ENCODE measurements at regions of chr21 and their contacts with region 1.

Region 1: GRCh38 chr21:33199516-33200217 is 30.1 kb upstream of the IFNAR2 start:
- DNase-seq: peak; percentile 31
- H3K4me3 ChIP-seq: no peak overlapping the region
- H3K27ac ChIP-seq: peak overlapping the region in 3 of 4 donors; percentile 40 to 64 (median 42)
- H3K4me1 ChIP-seq: peaks cover 0 to 33% (median 19%) of the 10 kb centered on the region in 3 donors
- H3K27me3 ChIP-seq: no peaks in the 10 kb centered on the region
- CTCF ChIP-seq: peak; percentile 73 to 89 (median 82)
- POLR2A ChIP-seq: no peak

Region 2: DNA sequence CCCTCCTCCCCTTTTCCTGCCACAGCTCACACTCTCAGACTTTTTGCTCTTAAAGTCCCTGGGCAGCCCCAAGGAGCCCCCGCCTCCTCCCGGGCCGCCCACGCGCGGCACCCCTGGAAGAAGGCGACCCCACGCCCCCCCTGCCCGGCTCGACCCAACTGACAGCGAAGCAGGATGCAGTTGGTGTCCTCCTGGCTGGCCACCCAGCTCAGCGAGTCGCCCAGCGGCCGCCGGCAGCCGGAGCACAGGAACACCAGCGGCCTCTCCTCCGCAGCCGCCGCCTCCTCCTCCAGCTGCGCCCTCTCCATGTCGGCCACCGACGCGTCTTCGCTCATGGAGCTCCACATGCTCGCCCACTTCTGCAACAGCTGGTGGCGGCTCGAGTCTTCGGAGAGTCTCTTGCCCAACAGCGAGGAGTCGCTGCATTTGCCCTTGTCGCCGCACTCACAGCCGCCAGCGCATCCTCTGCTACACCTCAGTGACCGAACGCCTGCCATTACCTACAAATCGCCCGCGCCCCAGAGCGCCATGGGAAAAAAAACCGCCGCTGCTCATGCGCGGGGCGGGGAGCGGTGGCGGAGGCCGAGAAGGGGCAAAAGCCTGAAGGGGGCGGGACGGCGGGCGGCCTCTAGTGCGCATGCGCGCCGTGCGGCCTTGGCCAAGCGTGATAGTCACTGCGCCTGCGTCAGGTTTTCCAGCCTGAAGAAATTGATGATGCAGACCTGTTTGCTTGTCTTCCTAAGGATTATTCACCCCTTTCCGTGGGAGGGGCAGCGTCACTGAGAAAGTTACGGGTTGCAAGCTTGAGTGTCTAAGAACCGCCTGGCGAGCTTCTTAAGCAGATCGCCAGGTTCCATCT is 920.9 kb before region 1 on chr21 and contains the start of gene MIS18A:
- intact Hi-C with region 1: no loop called
- DNase-seq: peak; percentile 60
- H3K4me3 ChIP-seq: peak within 1 kb of the TSS; percentile 75 to 91 (median 82)
- H3K27ac ChIP-seq: peak within 1 kb of the TSS; percentile 75 to 84 (median 76)
- H3K4me1 ChIP-seq: peaks cover 15 to 29% (median 18%) of the 10 kb centered on the region in 3 donors
- H3K27me3 ChIP-seq: no peaks in the 10 kb centered on the region
- CTCF ChIP-seq: peak in 2 of 6 experiments; percentile 10 to 58
- POLR2A ChIP-seq: peak in 3 of 4 donors; percentile 30 to 53 (median 37)
- total RNA-seq, gene MIS18A: 4.3 to 13.7 (median 8.9) TPM

Region 3: DNA sequence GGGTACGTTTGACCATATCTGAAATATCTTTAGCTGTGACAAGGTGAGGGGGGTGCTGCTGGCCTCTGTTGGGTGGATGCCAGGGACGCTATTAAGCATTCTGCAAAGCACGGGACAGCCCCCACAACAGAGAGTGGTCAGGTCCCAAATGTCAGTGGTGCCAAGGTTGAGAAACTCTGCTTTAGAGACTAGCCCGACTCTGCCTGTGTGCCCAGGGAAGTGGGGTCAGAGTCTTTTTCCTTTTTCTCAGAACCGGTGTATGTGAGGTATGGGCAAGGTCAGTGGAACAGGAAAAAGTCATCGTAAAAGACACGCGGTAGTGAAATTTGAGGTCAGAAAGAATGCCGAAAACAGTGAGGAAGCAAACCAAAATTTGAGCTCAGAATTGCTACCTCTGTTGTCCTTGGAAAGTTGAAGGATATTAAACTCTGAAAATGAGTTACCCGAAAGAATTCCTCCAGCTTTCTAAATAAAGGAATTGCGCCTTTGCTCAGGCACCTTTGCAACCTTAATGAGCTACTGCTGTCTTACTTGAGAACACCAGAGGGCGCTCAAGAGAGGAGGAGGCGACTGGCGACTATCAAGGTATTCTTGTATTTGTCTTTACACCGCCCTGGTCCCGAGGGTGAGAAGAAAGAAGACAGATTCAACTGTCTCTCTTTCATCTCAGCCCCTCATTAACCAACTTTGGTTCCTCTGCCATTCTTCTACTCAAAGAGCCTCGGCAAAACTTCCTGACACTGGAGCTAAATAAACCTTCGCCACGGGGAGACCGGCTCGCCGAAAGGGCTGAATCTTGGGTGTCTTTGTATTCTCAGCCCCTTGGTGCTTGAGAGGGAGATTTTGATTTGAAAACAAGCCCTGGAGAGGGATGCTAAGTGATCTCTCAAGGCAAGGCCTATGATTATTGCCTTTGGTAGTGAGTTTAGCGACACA is 259.3 kb before region 1 on chr21:
- intact Hi-C with region 1: loop called (anchors 10 kb)
- DNase-seq: no peak
- H3K4me3 ChIP-seq: no peak overlapping the region
- H3K27ac ChIP-seq: no peak overlapping the region
- H3K4me1 ChIP-seq: no peaks in the 10 kb centered on the region
- H3K27me3 ChIP-seq: peaks cover 0 to 25% (median 0%) of the 10 kb centered on the region in 4 donors
- CTCF ChIP-seq: peak; percentile 46 to 79 (median 60)
- POLR2A ChIP-seq: no peak

Region 4: GRCh38 chr21:33051925-33052324 is 147.7 kb before region 1 on chr21:
- intact Hi-C with region 1: no loop called
- DNase-seq: no peak
- H3K4me3 ChIP-seq: no peak overlapping the region
- H3K27ac ChIP-seq: no peak overlapping the region
- H3K4me1 ChIP-seq: no peaks in the 10 kb centered on the region
- H3K27me3 ChIP-seq: peaks cover 0 to 74% (median 0%) of the 10 kb centered on the region in 4 donors
- CTCF ChIP-seq: no peak
- POLR2A ChIP-seq: no peak

Region 5: GRCh38 chr21:33355355-33355754 is 155.7 kb after region 1 on chr21:
- intact Hi-C with region 1: loop called (anchors 10 kb)
- DNase-seq: no peak
- H3K4me3 ChIP-seq: no peak overlapping the region
- H3K27ac ChIP-seq: no peak overlapping the region
- H3K4me1 ChIP-seq: peaks cover 0 to 6% (median 5%) of the 10 kb centered on the region in 3 donors
- H3K27me3 ChIP-seq: no peaks in the 10 kb centered on the region
- CTCF ChIP-seq: no peak
- POLR2A ChIP-seq: no peak

Region 6: GRCh38 chr21:33449616-33450015 is 249.9 kb after region 1 on chr21:
- intact Hi-C with region 1: loop called (anchors 5 kb)
- DNase-seq: no peak
- H3K4me3 ChIP-seq: no peak overlapping the region
- H3K27ac ChIP-seq: no peak overlapping the region
- H3K4me1 ChIP-seq: peaks cover 0 to 9% (median 0%) of the 10 kb centered on the region in 3 donors
- H3K27me3 ChIP-seq: no peaks in the 10 kb centered on the region
- CTCF ChIP-seq: no peak
- POLR2A ChIP-seq: no peak